A549 (cell line): ENCODE measurements at regions of chr10 and their contacts with region 1.

Region 1: DNA sequence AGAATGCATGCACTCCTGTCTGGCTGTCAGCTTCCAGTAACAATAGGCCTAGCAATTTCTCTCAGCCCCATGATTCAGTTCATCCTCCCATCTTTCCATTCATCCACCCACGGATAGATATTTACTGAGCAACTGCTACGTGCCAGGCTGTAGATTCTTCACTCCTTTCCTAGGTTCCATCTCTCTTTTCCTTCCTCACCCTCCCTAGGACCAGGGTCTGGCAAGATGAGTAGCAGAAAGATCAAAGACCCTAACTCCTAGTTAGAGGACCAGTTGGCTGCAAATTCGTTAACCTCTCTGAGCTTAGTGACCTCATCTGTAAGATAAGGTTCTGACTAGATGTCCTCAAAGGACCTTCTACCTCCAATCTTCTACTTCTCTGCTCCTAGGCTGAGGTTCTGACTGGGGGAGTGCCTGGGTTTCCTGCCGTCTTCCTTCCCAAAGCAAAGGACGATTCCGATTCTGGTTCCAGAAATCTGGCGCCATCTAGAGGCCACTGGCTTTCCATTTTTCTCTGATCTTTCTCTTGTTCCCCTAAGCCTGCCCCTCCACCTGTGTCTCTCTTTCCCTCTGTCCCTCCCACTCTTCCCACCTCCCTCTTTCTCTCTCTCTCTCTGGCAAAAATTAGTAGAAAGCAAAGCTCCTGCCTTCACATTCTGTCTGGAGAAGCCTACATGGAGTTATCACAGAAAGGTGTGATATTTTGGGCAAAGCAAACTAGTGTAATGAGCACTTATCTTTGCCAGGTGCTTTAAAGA is 26.2 kb downstream of the TBATA start:
- DNase-seq: peak; percentile 59 to 67
- ATAC-seq: peak; percentile 45 to 80
- H3K4me3 ChIP-seq: no peak overlapping the region
- H3K27ac ChIP-seq: no peak overlapping the region
- H3K4me1 ChIP-seq: 0 out of 3 replicates have a peak, but pooled peaks cover 5% of the 10 kb centered on the region
- CTCF ChIP-seq: peak; percentile 75
- EP300 ChIP-seq: no peak
- POLR2A ChIP-seq: no peak
- RAD21 ChIP-seq: peak; percentile 71 to 81

Region 2: DNA sequence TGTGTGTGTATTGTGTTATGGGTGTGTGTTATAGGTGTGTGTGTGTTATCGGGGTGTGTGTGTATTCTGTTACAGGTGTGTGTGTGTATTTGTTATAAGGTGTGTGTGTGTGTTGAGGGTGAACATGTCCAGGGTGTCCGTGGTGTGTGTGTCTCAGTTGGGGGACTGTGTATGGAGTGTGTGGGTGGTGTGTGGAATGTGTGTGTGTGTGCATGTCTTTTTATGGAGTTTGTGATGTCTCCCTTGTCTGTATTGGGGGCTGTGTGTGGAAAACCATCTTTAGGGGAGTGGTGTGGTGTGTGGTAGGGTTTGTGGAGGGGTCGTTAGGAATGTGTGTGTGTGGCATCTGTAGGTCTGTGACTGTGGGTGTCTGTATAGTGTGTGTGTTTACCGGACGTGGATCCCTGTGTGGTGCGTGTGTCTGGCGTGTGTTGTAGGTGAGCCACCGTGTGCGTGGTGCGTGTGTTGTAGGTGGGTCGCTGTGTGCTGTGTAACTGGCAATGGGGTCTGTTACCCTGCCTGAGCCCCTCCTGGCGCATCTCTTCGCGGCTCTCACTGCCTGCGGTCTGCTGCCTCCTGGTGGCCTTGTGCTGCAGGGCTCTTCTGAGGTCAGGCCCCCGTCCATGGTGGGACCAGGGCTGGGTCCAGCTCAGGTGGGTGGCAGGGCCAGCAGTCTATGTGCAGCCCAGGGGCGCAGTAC is 218.7 kb before region 1 on chr10:
- CTCF ChIA-PET with region 1: interaction called, 10 read pairs
- POLR2A ChIA-PET with region 1: no interaction called
- DNase-seq: peak; percentile 27 to 58
- ATAC-seq: peak; percentile 55 to 85; a peak in 5 of 6 replicates
- H3K4me3 ChIP-seq: no peak overlapping the region
- H3K27ac ChIP-seq: no peak overlapping the region
- H3K4me1 ChIP-seq: no peaks in the 10 kb centered on the region
- CTCF ChIP-seq: peak; percentile 60; the same call in 2 of the 3 replicates
- EP300 ChIP-seq: no peak
- POLR2A ChIP-seq: no peak
- RAD21 ChIP-seq: peak; percentile 68 to 74

Region 3: GRCh38 chr10:70558871-70559810 is 199.8 kb before region 1 on chr10:
- CTCF ChIA-PET with region 1: interaction called, 45 read pairs
- POLR2A ChIA-PET with region 1: no interaction called
- DNase-seq: peak; percentile 48 to 52
- ATAC-seq: peak; percentile 75 to 90
- H3K4me3 ChIP-seq: no peak overlapping the region
- H3K27ac ChIP-seq: no peak overlapping the region
- H3K4me1 ChIP-seq: no peaks in the 10 kb centered on the region
- CTCF ChIP-seq: peak; percentile 41
- EP300 ChIP-seq: no peak
- POLR2A ChIP-seq: no peak
- RAD21 ChIP-seq: peak in 1 of 2 experiments; percentile 37; a peak in 3 of 5 replicates

Region 4: DNA sequence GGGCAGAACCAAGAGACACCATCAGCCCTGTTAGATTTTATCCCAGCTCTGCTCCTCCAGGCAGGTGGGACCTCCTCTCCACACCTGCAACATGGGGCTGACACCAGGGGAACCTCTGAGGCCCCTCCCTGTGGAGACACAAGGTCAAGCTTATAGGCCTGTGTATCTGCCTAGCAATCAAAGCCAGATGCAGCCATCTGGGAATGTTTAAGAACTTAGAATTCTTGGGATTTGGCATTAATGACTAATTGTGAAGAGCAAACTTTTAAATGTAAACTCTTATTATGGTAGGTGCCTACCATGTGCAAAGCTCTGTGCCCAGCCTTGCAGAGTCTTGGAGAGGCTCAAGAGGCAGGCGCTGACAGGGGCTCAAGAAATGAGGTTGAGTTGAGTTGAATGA is 25.9 kb before region 1 on chr10:
- CTCF ChIA-PET with region 1: interaction called, 11 read pairs
- POLR2A ChIA-PET with region 1: no interaction called
- DNase-seq: no peak
- ATAC-seq: no peak
- H3K4me3 ChIP-seq: no peak overlapping the region
- H3K27ac ChIP-seq: no peak overlapping the region
- H3K4me1 ChIP-seq: no peaks in the 10 kb centered on the region
- CTCF ChIP-seq: no peak
- EP300 ChIP-seq: no peak
- POLR2A ChIP-seq: no peak
- RAD21 ChIP-seq: no peak

Region 5: GRCh38 chr10:70747192-70747965 is 11.6 kb before region 1 on chr10:
- CTCF ChIA-PET with region 1: interaction called, 16 read pairs
- POLR2A ChIA-PET with region 1: no interaction called
- DNase-seq: no peak
- ATAC-seq: no peak
- H3K4me3 ChIP-seq: no peak overlapping the region
- H3K27ac ChIP-seq: no peak overlapping the region
- H3K4me1 ChIP-seq: no peaks in the 10 kb centered on the region
- CTCF ChIP-seq: no peak
- EP300 ChIP-seq: no peak
- POLR2A ChIP-seq: no peak
- RAD21 ChIP-seq: no peak